ENCODE measurements at regions of chr12 and their contacts with region 1.

Region 1: DNA sequence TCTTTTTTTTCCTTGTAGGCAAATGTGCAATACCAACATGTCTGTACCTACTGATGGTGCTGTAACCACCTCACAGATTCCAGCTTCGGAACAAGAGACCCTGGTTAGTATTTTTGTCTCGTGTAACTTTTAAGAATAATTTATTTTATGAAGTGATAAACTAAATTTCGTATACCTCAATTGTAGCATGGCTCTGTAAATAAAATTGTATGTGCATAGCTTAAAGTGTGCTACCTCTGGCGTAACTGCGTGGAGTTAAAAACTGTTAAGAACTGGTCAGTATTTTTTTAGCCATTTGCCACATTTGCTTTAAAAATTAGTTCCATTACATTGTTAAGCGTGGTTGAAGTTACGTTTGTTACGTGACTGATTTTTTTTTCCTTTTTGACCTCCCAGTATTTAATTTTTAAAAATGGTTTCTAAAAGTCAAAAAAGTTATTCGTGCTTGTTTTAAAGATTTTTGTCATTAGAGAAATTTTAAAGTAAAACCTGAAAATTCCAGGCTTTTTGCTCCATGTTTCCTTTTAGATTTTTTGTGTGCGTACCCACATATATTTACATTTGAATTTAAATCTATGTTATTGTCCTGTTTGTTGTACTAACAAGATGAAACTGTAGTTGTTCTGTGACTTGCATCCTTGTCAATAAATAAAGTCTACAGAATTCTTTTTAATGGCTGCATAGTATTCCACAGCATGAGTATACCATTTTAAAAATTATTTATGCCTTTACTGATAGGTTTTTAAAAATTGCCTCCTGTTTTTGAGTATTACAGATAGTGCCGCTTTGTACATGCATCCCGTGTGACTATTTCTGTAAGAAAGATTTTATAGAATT is 1.4 kb downstream of the MDM2 start:
- DNase-seq: no peak
- H3K4me3 ChIP-seq: peak overlapping the region; percentile 74 to 89 (median 88)
- H3K27ac ChIP-seq: peak overlapping the region; percentile 95 to 100 (median 99)
- H3K4me1 ChIP-seq: peaks cover 16 to 46% of the 10 kb centered on the region in 2 donors
- H3K27me3 ChIP-seq: no peaks in the 10 kb centered on the region
- CTCF ChIP-seq: no peak
- POLR2A ChIP-seq: no peak

Region 2: DNA sequence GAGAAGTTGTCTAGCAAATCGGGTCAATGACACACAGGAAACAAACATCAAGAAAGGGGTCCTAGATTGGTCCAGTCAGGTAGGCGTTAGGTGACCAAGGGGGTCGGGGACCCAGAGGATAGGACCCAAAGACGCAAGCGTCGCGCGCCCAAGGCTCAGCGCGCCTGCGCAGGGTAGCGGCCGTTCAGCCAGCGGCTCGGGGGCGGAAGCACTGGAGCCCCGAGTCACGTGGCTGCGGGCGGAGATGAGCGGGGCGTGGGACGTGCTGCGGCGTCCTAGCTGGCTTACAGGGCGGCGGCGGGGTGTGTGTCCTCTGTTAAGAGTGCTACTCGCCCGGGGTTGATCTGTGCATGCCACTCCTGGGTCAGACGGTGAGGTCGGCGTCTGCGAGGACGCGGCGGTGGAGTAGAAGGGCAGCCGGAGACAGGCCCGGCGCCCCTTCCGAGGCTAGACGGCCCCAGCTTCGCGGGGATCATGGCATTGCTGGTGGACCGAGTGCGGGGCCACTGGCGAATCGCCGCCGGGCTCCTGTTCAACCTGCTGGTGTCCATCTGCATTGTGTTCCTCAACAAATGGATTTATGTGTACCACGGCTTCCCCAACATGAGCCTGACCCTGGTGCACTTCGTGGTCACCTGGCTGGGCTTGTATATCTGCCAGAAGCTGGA is 63.4 kb before region 1 on chr12 and contains the start of gene SLC35E3:
- intact Hi-C with region 1: loop called in 1 of 2 experiments (anchors 10 kb)
- DNase-seq: peak; percentile 91 to 96 (median 94)
- H3K4me3 ChIP-seq: peak within 1 kb of the TSS; percentile 12 to 83 (median 54)
- H3K27ac ChIP-seq: peak within 1 kb of the TSS; percentile 28 to 88 (median 70)
- H3K4me1 ChIP-seq: peaks cover 9 to 23% of the 10 kb centered on the region in 2 donors
- H3K27me3 ChIP-seq: no peaks in the 10 kb centered on the region
- CTCF ChIP-seq: peak in 1 of 6 experiments; percentile 14
- POLR2A ChIP-seq: peak in 1 of 2 donors; percentile 90
- total RNA-seq, gene SLC35E3: 2.7 to 23.1 (median 11.6) TPM

Region 3: DNA sequence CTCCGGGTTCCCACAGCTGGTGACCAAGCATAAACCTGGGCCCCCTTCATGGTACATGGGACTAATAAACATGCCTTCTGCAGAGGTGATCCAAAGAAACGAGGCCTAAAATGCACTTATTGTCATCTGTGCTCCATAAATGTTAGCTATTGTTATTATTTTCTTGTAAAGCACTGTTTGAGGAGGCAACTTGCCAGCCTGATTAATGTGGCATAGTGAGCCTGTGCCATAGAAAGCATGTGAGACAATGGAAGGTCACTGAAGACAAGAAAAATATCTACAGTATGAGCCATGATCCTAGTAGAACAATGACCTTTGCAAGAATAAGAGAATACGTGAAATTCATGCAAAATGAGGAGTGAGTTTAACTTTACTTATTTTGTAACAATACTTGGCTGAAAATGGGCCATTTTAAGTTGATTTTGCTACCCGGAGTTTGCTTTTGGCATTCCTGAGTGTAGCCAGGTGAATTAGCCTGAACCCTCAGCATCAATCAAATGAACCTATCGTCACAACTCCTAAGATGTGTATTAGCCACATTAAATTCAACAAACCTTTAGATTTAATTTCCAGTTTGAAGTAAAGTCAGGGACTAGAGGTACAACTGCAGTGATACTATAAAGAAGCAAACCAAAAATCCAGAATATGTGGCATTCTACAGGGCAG is 71.4 kb after region 1 on chr12:
- intact Hi-C with region 1: no loop called
- DNase-seq: peak; percentile 48 to 71 (median 58)
- H3K4me3 ChIP-seq: no peak overlapping the region
- H3K27ac ChIP-seq: no peak overlapping the region
- H3K4me1 ChIP-seq: peaks cover 3 to 9% of the 10 kb centered on the region in 2 donors
- H3K27me3 ChIP-seq: no peaks in the 10 kb centered on the region
- CTCF ChIP-seq: no peak
- POLR2A ChIP-seq: no peak